Activated B cell treated with CpG ODN at 0.5 μM for 24 hours (primary cell): ENCODE measurements at regions of chr17 and their contacts with region 1.

Region 1: GRCh38 chr17:3710951-3711383 is 12.7 kb upstream of the HASPIN start:
- DNase-seq: no peak
- ATAC-seq: peak; percentile 93
- H3K4me3 Mint-ChIP-seq: peak overlapping the region; percentile 80
- H3K27ac Mint-ChIP-seq: peak overlapping the region; percentile 95
- H3K4me1 Mint-ChIP-seq: peaks cover 69% of the 10 kb centered on the region
- H3K27me3 Mint-ChIP-seq: no peaks in the 10 kb centered on the region
- CTCF ChIP-seq: no peak

Region 2: GRCh38 chr17:3683054-3683511 is 27.9 kb before region 1 on chr17:
- CTCF ChIA-PET with region 1: interaction called, 16 read pairs
- POLR2A ChIA-PET with region 1: interaction called, 22 read pairs
- intact Hi-C with region 1: loop called (anchors 1 kb)
- DNase-seq: peak; percentile 58
- ATAC-seq: peak; percentile 75
- H3K4me3 Mint-ChIP-seq: peak overlapping the region; percentile 58
- H3K27ac Mint-ChIP-seq: peak overlapping the region; percentile 83
- H3K4me1 Mint-ChIP-seq: peaks cover 46% of the 10 kb centered on the region
- H3K27me3 Mint-ChIP-seq: no peaks in the 10 kb centered on the region
- CTCF ChIP-seq: peak; percentile 72

Region 3: GRCh38 chr17:3688027-3688553 is 22.9 kb before region 1 on chr17:
- CTCF ChIA-PET with region 1: interaction called, 16 read pairs
- POLR2A ChIA-PET with region 1: interaction called, 315 read pairs
- intact Hi-C with region 1: loop called (anchors 1 kb)
- DNase-seq: peak; percentile 49
- ATAC-seq: peak; percentile 31
- H3K4me3 Mint-ChIP-seq: peak overlapping the region; percentile 71
- H3K27ac Mint-ChIP-seq: peak overlapping the region; percentile 82
- H3K4me1 Mint-ChIP-seq: peaks cover 71% of the 10 kb centered on the region
- H3K27me3 Mint-ChIP-seq: no peaks in the 10 kb centered on the region
- CTCF ChIP-seq: no peak

Region 4: DNA sequence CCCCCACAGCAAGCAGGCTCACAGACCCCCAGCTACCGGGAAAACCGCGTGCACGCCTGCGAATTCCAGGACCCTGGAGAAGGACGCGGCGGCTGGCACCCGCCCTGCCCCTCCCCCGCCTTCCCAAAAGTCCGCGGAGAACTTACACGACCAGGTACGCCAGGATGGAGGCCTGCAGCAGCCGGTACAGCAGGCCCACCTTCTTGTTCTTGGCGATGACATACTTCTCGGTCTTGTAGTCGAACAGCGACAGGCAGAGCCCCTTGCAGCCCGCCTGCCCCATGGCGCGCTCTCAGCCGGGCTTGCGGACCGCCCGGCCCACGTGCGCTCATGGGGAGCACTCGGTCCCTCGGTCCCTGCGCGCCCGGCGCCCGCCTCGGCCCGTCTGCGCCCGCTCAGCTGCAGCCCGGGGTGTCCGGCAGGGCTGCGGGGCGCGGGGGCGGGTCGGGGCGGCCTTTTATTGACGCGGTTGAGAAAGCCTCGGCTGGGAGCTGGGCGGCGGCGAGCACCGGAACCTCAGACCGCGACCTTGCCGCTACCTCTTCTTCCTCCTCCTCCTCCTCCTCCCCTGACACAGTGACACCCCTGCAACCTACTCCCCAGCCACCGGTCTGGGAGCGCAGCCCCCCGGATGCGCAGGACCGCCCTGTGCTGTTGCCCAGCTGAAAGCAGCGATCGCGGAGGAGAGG is 15.1 kb before region 1 on chr17 and contains the start of gene P2RX5:
- CTCF ChIA-PET with region 1: interaction called, 12 read pairs
- POLR2A ChIA-PET with region 1: interaction called, 315 read pairs
- intact Hi-C with region 1: loop called (anchors 1 kb)
- DNase-seq: peak; percentile 66
- ATAC-seq: peak; percentile 58
- H3K4me3 Mint-ChIP-seq: peak within 1 kb of the TSS; percentile 99
- H3K27ac Mint-ChIP-seq: peak within 1 kb of the TSS; percentile 97
- H3K4me1 Mint-ChIP-seq: peaks cover 77% of the 10 kb centered on the region
- H3K27me3 Mint-ChIP-seq: no peaks in the 10 kb centered on the region
- CTCF ChIP-seq: no peak
- total RNA-seq, gene P2RX5: 295 and 349 TPM in 2 replicates

Region 5: GRCh38 chr17:3723556-3724369 is 12.8 kb after region 1 on chr17 and contains the start of gene HASPIN:
- CTCF ChIA-PET with region 1: interaction called, 4 read pairs
- POLR2A ChIA-PET with region 1: interaction called, 66 read pairs
- intact Hi-C with region 1: loop called (anchors 1 kb)
- DNase-seq: peak; percentile 91
- ATAC-seq: peak; percentile 73
- H3K4me3 Mint-ChIP-seq: peak within 1 kb of the TSS; percentile 92
- H3K27ac Mint-ChIP-seq: peak within 1 kb of the TSS; percentile 85
- H3K4me1 Mint-ChIP-seq: peaks cover 72% of the 10 kb centered on the region
- H3K27me3 Mint-ChIP-seq: no peaks in the 10 kb centered on the region
- CTCF ChIP-seq: no peak
- total RNA-seq, gene HASPIN: 6.4 and 6.7 TPM in 2 replicates

Region 6: DNA sequence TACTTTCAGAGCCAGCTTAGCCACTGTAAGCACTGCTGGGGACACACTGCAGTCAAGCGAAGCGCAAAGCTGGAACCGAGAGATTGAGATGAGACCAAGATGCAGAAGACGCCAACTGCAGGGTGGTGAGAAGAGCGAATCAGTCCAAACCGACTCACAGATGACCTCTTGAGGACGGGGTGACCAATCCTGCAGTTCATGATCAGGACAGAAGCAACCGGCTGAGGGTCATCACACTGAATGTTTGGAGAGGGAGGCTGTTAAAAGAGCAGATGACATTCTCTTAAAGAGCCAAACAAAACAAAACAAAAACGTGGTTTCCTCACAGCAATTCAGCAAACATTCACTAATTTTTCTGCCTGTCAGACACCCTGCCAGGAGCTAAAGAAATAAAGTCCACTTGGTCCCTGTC is 21.2 kb after region 1 on chr17:
- CTCF ChIA-PET with region 1: interaction called, 13 read pairs
- POLR2A ChIA-PET with region 1: interaction called, 42 read pairs
- intact Hi-C with region 1: loop called (anchors 1 kb)
- DNase-seq: no peak
- ATAC-seq: peak; percentile 91
- H3K4me3 Mint-ChIP-seq: no peak overlapping the region
- H3K27ac Mint-ChIP-seq: peak overlapping the region; percentile 27
- H3K4me1 Mint-ChIP-seq: peaks cover 40% of the 10 kb centered on the region
- H3K27me3 Mint-ChIP-seq: no peaks in the 10 kb centered on the region
- CTCF ChIP-seq: no peak